WTC11 (cell line): ENCODE measurements at regions of chr9 and their contacts with region 1.

Region 1: DNA sequence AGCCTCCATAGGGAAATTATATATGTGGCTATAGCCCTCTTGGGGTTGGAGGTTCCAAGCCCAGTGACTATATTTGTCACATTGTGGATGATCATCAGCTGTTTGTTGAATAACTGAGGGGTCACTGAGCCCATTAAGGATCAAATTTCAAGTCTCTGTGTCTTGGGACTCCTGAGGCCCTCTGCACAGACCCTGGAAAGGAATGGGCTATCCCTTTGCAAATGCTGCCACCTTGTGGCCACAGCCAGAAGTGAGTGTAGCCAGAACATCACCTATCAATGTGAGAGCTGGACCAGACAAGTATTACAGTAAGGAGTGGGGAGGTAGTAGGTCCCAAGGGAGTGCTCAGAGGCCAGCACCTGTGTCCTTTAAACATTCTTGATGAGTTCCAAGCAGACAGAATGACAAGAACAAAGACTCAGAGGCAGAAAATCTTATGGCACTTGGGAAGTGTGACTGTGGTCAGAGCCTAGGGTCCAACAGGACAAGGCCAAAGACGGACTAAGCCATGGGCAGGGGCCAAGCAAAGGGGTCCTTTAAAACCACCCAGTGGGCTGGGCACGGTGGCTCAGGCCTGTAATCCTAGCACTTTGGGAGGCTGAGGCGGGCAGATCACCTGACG is 8.2 kb downstream of the RPP25L start:
- DNase-seq: peak; percentile 96
- ATAC-seq: peak; percentile 93
- H3K4me3 Mint-ChIP-seq: no peak overlapping the region
- H3K27ac Mint-ChIP-seq: no peak overlapping the region
- H3K4me1 Mint-ChIP-seq: peaks cover 9% of the 10 kb centered on the region
- H3K27me3 Mint-ChIP-seq: no peaks in the 10 kb centered on the region; the same call in 1 of the 2 replicates
- CTCF ChIP-seq: peak; percentile 94

Region 2: DNA sequence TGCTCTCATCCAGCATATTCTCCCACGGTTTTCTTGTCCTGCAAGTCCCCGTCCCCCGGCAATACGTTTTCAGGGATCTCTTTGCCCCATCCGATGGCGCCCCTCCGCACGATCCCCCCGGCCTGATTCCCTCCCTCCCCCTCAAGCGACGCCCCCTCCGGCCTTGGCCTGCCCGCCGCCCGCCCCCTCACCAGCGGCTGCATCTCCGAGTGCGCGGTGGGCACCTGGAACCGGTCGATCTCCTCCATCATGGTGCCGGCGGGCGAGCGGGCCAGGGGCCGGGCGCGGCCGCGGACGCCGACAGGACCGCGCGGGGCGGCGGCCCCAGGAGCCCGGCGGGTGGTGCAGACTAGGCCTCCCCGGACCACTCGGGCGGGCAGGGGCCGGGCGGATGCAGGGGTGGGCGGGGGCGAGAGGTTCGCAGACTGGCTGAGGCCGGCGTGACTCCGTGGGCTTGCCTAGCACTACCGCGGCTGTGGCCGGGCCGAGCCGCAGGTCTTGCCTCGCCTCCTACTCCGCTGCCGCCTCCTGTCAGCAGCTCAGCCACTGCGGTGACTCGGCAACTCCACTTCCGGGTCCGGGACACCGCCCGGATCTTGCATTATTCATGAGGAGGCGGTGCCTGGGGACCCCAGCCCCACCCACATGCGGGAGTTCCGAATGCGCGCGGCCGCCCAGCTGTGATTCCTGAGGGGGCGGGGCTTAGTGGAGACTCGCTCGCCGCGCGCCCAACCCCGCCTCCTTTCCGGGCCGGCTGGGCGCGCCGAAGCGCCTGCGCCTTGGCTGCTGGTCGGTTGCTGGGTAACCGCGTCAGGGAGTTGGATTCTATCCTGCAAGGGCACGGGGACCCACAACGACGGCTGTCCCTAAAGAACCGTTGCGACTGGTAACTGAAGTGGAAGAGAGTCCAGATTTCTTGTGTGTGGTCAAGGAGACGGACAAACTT is 145.4 kb before region 1 on chr9 and contains the starts of genes DNAI1 and FAM219A:
- CTCF ChIA-PET with region 1: interaction called, 15 read pairs
- POLR2A ChIA-PET with region 1: no interaction called
- DNase-seq: peak; percentile 99
- ATAC-seq: peak; percentile 79
- H3K4me3 Mint-ChIP-seq: peak within 1 kb of the TSS; percentile 86
- H3K27ac Mint-ChIP-seq: peak within 1 kb of the TSS; percentile 70
- H3K4me1 Mint-ChIP-seq: peaks cover 18% of the 10 kb centered on the region
- H3K27me3 Mint-ChIP-seq: peaks cover 32% of the 10 kb centered on the region
- CTCF ChIP-seq: no peak
- total RNA-seq, gene DNAI1: 1.5 to 2.1 TPM (median 1.6 TPM) in 3 replicates
- total RNA-seq, gene FAM219A: 17.2 to 20.6 TPM (median 19.5 TPM) in 3 replicates

Region 3: GRCh38 chr9:34513567-34514214 is 90.0 kb before region 1 on chr9:
- CTCF ChIA-PET with region 1: interaction called, 40 read pairs
- POLR2A ChIA-PET with region 1: no interaction called
- DNase-seq: peak; percentile 72
- ATAC-seq: peak; percentile 78
- H3K4me3 Mint-ChIP-seq: peak overlapping the region; percentile 43
- H3K27ac Mint-ChIP-seq: peak overlapping the region; percentile 96
- H3K4me1 Mint-ChIP-seq: peaks cover 59% of the 10 kb centered on the region
- H3K27me3 Mint-ChIP-seq: no peaks in the 10 kb centered on the region
- CTCF ChIP-seq: no peak

Region 4: DNA sequence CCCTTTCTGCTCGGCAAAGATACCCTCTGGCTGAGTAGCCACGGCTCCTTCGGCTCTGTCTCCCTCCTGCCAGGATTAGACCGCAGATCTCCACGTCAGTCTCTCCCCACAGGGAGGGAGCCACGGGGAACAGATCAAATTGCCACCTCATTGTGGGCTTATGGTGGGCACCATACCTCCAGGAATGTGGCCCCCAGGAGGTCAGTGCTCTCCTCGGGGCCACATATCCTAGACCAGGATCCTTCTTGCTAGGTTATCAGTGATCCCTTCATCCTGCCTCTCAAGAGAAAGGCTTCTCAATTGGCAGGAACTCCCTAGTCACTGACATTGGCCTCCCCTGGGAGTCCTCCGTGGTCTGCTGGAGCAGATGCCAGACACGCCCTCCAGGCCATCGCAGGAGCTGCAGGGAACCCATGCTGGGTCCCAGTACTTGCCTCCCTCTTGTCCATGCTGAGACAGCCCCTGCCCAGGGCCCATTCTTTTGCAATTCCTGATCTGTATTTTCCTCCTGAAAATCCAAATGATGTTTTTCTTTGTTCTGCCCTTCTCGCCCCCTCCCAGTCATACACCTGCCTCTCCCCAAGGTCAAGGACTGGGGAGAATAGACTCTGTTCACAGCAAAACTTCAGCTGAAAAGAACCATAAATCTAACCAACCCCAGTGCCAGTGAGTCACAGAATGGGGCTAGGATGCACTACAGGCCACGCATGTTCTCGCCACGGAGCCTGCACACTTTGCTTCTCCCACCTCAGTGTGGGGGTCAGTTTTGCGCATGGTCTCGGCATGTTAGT is 49.3 kb before region 1 on chr9:
- CTCF ChIA-PET with region 1: interaction called, 19 read pairs
- POLR2A ChIA-PET with region 1: no interaction called
- DNase-seq: no peak
- ATAC-seq: peak; percentile 47
- H3K4me3 Mint-ChIP-seq: no peak overlapping the region
- H3K27ac Mint-ChIP-seq: no peak overlapping the region; the same call in 1 of the 2 replicates
- H3K4me1 Mint-ChIP-seq: peaks cover 36% of the 10 kb centered on the region
- H3K27me3 Mint-ChIP-seq: peaks cover 3% of the 10 kb centered on the region; the same call in 1 of the 2 replicates
- CTCF ChIP-seq: no peak

Region 5: DNA sequence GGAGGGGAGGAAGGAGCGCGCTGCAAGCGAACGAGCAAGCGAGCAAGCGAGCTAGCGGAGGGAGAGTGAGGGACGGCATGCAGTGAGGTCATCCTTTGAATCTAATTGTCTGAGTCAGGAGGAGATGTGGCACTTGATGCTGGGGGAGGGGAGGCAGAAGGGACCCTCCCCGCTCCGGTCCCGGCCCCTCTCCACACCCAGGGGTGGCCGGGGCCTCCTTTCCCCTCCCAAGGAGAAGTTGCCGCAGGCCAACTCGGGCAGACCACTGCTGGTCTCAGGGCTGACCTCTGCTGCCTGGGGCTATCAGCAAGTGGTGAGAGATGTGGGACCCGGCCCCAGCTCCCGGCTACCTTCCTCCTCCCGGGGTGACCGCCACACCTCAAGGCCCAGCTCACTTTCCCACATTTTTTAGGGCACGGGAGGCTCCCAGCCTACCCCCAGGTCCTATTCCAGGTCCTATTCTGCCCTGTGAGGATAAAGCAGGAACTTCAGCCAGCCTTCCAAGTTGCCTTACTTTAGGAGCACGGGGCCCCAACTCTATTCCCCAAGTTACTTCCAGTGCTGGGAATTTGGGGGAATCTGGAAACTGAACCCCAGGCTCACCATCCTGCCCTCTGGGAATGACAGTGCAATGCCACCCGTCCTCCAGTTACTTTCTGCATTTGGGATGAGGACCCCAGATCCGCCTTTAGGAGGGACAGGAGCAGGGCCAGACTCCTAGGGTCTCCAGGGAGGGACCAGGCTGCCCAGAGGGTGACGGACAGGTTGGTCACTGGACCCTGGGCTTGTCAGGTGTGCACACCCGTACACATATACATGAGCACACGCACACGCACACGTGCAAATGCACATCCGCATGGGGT is 25.2 kb before region 1 on chr9:
- CTCF ChIA-PET with region 1: interaction called, 38 read pairs
- POLR2A ChIA-PET with region 1: no interaction called
- DNase-seq: peak; percentile 56
- ATAC-seq: peak; percentile 25
- H3K4me3 Mint-ChIP-seq: peak overlapping the region; percentile 67
- H3K27ac Mint-ChIP-seq: no peak overlapping the region
- H3K4me1 Mint-ChIP-seq: peaks cover 48% of the 10 kb centered on the region
- H3K27me3 Mint-ChIP-seq: peaks cover 73% of the 10 kb centered on the region
- CTCF ChIP-seq: no peak

Region 6: GRCh38 chr9:34628656-34629491 is 25.2 kb after region 1 on chr9 and contains the start of gene ARID3C:
- CTCF ChIA-PET with region 1: interaction called, 25 read pairs
- POLR2A ChIA-PET with region 1: no interaction called
- DNase-seq: peak; percentile 53
- ATAC-seq: peak; percentile 68
- H3K4me3 Mint-ChIP-seq: peak within 1 kb of the TSS; percentile 73
- H3K27ac Mint-ChIP-seq: no peak within 1 kb of the TSS
- H3K4me1 Mint-ChIP-seq: peaks cover 21% of the 10 kb centered on the region
- H3K27me3 Mint-ChIP-seq: peaks cover 89% of the 10 kb centered on the region
- CTCF ChIP-seq: no peak
- total RNA-seq, gene ARID3C: 0.14 to 0.23 TPM (median 0.15 TPM) in 3 replicates